ENCODE measurements at regions of chr12 and their contacts with region 1.

Region 1: GRCh38 chr12:92879698-92880305 is 49.3 kb downstream of the EEA1 start:
- DNase-seq: no peak
- H3K4me3 ChIP-seq: no peak overlapping the region
- H3K27me3 ChIP-seq: no peaks in the 10 kb centered on the region
- CTCF ChIP-seq: no peak

Region 2: GRCh38 chr12:92769124-92769901 is 110.5 kb before region 1 on chr12:
- CTCF ChIA-PET with region 1: no interaction called
- POLR2A ChIA-PET with region 1: interaction called, 12 read pairs
- DNase-seq: no peak
- H3K4me3 ChIP-seq: no peak overlapping the region
- H3K27me3 ChIP-seq: no peaks in the 10 kb centered on the region
- CTCF ChIP-seq: no peak

Region 3: DNA sequence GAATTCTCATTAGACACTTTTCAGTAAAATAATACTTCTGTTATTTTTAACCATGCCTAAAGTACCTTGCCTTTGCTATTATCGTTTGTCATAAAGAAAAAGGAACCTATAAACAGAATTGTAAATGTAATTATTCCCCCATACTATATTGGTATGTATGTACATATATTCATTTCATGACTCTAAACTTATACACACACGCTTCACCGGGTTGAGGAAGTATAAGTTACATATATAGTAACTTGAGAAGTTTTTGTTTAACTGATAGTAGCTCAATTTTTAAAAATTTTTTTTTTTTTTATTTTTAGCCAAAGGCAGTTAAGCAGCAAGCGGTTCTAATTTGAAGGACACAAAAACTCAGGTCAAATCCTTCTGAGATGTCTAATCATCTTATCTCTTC is 69.4 kb before region 1 on chr12:
- CTCF ChIA-PET with region 1: no interaction called
- POLR2A ChIA-PET with region 1: no interaction called
- DNase-seq: no peak
- H3K4me3 ChIP-seq: no peak overlapping the region
- H3K27me3 ChIP-seq: no peaks in the 10 kb centered on the region
- CTCF ChIP-seq: no peak